ENCODE measurements at regions of chr15 and their contacts with region 1.

Region 1: DNA sequence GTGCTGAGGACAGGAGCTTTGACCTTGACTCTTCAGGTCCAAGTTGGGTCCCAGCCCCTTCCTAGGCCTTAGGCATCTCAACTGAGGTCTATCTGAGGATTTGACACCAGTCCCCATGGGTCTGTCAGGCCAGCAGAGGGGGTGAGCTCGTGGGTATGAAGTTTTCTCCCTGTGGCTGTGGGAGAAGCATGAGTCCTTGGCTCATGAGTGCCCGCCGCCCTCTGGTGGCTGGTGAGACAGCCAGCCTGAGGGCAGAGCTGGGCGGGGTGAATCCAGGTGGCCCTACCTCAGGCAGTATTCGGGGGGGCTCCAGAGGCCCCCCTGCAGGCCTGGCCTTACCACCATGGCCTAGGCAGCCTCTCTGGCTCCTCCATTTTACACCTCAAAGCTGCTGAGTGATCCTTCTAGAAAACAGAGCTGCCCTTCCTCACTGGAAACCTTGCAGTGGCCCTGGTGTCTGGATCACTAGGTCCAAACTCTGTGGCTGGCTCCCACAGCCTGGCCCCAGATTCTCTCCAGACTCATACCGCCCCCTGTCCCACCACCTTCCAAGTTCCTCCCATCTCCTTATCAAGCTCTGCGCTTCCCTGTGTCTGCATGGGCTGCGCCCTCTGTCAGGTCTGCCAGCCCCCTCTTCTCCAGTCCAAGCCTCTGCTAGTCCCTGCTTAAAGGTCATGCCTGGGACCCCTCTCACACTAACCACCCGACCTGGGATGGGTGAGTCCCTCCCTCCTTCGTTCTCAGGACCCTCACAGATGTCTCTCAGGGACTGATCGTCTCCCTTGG is 16.1 kb downstream of the SH2D7 start:
- DNase-seq: peak; percentile 92
- H3K4me3 Mint-ChIP-seq: no peak overlapping the region
- H3K27ac Mint-ChIP-seq: no peak overlapping the region
- H3K4me1 Mint-ChIP-seq: peaks cover 17% of the 10 kb centered on the region
- H3K27me3 Mint-ChIP-seq: no peaks in the 10 kb centered on the region
- CTCF ChIP-seq: peak; percentile 98

Region 2: DNA sequence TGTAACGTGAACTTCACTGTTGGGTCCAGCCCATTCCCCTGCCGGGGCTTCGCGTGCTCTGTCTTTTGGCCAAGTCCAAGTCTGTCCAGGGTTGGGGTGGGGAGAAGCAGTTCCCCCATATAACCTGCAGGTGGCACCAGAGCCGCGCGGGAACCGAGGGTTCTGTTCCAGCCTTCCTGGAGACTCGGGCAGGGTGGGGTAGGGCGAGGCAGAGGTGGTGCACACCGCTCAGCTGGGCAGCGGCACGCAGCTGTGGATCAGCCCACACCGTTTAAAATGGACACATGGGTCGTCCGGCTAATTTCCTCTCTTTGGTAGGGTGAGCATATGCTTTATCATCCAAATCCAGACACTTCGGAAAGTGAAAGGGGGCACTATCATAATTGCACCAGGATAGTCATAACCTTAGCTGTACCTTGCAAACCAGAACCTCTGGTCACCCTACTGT is 149.0 kb before region 1 on chr15:
- CTCF ChIA-PET with region 1: interaction called, 40 read pairs
- intact Hi-C with region 1: loop called (anchors 1 kb)
- DNase-seq: peak; percentile 93
- H3K4me3 Mint-ChIP-seq: peak overlapping the region; percentile 20
- H3K27ac Mint-ChIP-seq: no peak overlapping the region
- H3K4me1 Mint-ChIP-seq: peaks cover 15% of the 10 kb centered on the region
- H3K27me3 Mint-ChIP-seq: peaks cover 42% of the 10 kb centered on the region
- CTCF ChIP-seq: peak; percentile 88

Region 3: DNA sequence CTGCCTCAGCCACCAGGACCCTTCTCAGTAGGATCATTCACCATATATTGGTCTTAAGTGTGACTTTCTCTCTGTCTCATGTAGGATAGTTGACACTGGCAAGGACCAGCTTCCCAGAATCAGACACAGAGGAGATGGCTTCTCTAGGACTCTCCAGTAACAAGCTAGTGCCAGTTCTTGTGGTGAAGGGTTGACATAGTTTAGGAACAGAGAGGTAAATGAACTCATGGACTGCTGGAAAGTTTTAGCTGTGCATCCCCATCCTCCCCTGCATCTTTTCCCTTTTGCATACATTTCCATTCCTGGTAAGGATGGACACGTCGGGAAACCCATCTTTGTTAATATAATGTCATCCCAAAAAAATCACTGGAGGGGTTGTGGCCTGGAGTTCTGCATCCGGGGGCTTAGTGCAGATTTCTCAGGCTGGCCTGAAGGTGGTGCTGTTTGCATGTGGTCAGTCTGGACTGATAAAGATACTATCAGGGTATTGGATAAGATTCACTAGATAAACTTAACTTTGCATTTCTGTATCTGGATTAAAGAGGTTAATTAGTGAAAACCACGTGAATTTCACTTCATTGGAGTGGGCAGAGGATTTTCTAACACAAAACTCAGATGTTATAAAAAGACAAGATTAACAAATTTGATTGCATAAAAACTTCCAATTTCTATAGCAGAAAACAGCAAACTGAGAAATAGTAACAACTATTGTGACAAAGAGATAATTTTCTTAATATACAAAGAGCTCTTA is 141.8 kb before region 1 on chr15:
- CTCF ChIA-PET with region 1: interaction called, 30 read pairs
- intact Hi-C with region 1: loop called (anchors 1 kb)
- DNase-seq: peak; percentile 77
- H3K4me3 Mint-ChIP-seq: no peak overlapping the region
- H3K27ac Mint-ChIP-seq: no peak overlapping the region
- H3K4me1 Mint-ChIP-seq: peaks cover 12% of the 10 kb centered on the region
- H3K27me3 Mint-ChIP-seq: peaks cover 22% of the 10 kb centered on the region
- CTCF ChIP-seq: peak; percentile 80

Region 4: DNA sequence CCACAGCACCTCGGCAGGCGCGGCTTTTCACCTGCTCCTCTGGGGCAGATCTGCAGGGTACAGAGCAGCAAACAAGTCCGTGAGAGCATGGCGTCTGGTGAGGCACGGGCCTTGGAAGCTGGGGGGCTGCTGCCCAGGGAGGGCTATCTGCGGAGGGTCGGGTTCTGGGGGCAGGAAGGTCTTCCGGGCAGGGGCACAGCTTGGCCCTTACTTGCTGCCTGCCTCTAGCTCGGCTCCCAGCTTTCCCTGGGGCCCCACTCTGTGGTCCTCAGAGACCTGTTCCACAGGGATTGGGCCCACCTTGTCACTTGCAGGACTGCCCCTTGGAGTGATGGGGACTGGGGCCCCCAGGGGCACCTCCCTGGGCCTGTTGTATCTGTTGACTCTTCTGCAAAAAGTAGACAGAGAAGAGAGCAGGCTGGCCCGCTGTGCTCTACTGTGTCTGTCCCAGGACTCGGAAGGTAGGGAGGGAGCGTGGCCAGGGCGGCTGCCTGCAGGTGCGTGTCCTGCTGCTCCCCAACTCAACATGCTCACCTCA is 115.0 kb before region 1 on chr15:
- CTCF ChIA-PET with region 1: interaction called, 11 read pairs
- intact Hi-C with region 1: no loop called
- DNase-seq: no peak
- H3K4me3 Mint-ChIP-seq: peak overlapping the region; percentile 54
- H3K27ac Mint-ChIP-seq: peak overlapping the region; percentile 55
- H3K4me1 Mint-ChIP-seq: peaks cover 30% of the 10 kb centered on the region
- H3K27me3 Mint-ChIP-seq: no peaks in the 10 kb centered on the region
- CTCF ChIP-seq: no peak

Region 5: GRCh38 chr15:78195735-78196201 is 87.3 kb after region 1 on chr15:
- CTCF ChIA-PET with region 1: interaction called, 33 read pairs
- intact Hi-C with region 1: loop called (anchors 1 kb)
- DNase-seq: peak; percentile 72
- H3K4me3 Mint-ChIP-seq: no peak overlapping the region
- H3K27ac Mint-ChIP-seq: no peak overlapping the region
- H3K4me1 Mint-ChIP-seq: no peaks in the 10 kb centered on the region
- H3K27me3 Mint-ChIP-seq: peaks cover 38% of the 10 kb centered on the region
- CTCF ChIP-seq: peak; percentile 90

Region 6: GRCh38 chr15:78241007-78241406 is 132.5 kb after region 1 on chr15:
- CTCF ChIA-PET with region 1: interaction called, 15 read pairs
- intact Hi-C with region 1: loop called (anchors 1 kb)
- DNase-seq: peak; percentile 95
- H3K4me3 Mint-ChIP-seq: no peak overlapping the region
- H3K27ac Mint-ChIP-seq: no peak overlapping the region
- H3K4me1 Mint-ChIP-seq: peaks cover 9% of the 10 kb centered on the region
- H3K27me3 Mint-ChIP-seq: peaks cover 19% of the 10 kb centered on the region
- CTCF ChIP-seq: peak; percentile 92

Region 7: DNA sequence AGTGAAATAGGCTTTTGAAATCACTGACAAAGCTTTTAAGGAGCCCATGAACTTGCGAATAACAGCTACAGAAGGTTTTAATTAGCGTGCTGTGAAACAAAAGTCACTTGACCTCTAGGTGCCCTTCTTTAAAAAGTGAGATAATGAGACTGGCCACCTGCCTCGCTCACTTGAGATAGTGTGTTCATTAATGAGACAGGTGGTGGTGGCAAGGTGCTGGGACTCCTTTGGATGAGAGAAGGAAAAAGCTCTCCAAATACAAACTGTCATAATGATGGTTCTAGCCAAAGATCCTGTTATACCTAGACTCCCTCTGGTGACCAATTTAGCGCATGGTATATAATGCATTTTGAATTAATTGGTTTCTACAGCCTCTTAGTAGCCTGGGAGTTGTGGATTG is 306.8 kb after region 1 on chr15:
- CTCF ChIA-PET with region 1: interaction called, 3 read pairs
- intact Hi-C with region 1: loop called (anchors 1 kb)
- DNase-seq: peak; percentile 10
- H3K4me3 Mint-ChIP-seq: no peak overlapping the region
- H3K27ac Mint-ChIP-seq: no peak overlapping the region
- H3K4me1 Mint-ChIP-seq: peaks cover 10% of the 10 kb centered on the region
- H3K27me3 Mint-ChIP-seq: no peaks in the 10 kb centered on the region
- CTCF ChIP-seq: peak; percentile 33

Measured in Calu3 (cell line).